ENCODE measurements at regions of chr11 and their contacts with region 1.

Region 1: DNA sequence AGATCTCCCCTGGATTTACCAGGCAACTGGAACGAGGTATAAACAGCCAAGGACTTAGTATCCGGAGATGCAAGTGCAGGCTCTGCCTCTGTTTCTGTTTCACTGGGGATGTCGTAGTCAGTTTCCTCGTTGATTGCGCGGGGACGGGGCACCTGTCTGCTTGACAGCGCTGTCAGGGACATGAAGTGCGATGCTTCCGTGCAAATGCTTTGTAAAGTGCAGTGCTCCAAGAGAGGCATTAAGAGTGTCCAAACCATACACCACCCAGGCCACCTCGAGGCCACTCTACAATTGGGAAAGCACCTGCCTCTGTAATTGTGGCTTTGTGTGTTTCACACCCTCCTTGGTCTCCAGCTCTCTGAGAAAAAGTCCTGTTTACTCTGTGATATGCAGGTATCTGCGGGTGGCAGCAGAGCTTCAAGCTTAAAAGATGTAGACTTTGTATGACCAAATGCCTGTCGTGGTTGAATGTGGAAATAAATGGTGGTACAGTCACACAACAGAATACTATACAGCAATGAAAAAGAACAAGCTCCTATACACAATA is 18.6 kb upstream of the CD5 start:
- DNase-seq: peak; percentile 84
- H3K4me3 Mint-ChIP-seq: peak overlapping the region; percentile 85
- H3K27ac Mint-ChIP-seq: peak overlapping the region; percentile 92
- H3K4me1 Mint-ChIP-seq: peaks cover 58% of the 10 kb centered on the region
- H3K27me3 Mint-ChIP-seq: no peaks in the 10 kb centered on the region

Region 2: DNA sequence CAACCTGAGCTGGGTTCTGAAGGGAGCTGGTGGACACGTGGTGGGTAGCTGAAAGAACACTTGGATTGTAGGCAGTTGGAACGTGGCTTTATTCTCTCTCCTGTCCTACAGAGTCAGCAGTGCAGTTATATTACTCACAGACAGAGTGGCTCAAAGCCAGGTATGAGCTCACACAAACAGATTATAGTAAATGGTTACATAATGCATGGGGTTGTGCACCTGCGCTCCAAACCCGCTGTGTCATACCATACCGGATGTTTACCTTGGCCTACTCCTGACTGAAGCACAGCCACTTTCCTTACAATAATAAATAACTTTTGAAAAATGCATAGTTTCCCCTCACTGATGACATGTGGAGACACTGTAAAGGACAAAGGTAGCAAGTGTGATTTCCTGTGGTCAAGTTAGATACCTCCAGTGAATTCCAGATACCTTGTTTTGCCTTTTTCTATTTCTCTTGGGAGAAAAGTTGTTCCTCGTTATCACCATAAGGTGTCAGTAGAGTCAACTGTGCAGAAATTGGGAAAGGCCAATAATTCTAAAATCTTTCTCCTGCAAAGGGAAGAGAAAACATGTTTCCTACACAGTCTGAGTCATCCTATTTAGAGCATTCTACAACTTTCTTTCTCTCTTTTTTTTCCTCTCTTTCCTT is 914.3 kb before region 1 on chr11:
- CTCF ChIA-PET with region 1: no interaction called
- POLR2A ChIA-PET with region 1: no interaction called
- intact Hi-C with region 1: no loop called
- DNase-seq: peak; percentile 24
- H3K4me3 Mint-ChIP-seq: no peak overlapping the region
- H3K27ac Mint-ChIP-seq: no peak overlapping the region
- H3K4me1 Mint-ChIP-seq: peaks cover 7% of the 10 kb centered on the region
- H3K27me3 Mint-ChIP-seq: peaks cover 30% of the 10 kb centered on the region

Region 3: GRCh38 chr11:60739114-60739513 is 344.6 kb before region 1 on chr11:
- CTCF ChIA-PET with region 1: no interaction called
- POLR2A ChIA-PET with region 1: no interaction called
- intact Hi-C with region 1: no loop called
- DNase-seq: no peak
- H3K4me3 Mint-ChIP-seq: no peak overlapping the region
- H3K27ac Mint-ChIP-seq: no peak overlapping the region
- H3K4me1 Mint-ChIP-seq: no peaks in the 10 kb centered on the region
- H3K27me3 Mint-ChIP-seq: peaks cover 4% of the 10 kb centered on the region

Region 4: DNA sequence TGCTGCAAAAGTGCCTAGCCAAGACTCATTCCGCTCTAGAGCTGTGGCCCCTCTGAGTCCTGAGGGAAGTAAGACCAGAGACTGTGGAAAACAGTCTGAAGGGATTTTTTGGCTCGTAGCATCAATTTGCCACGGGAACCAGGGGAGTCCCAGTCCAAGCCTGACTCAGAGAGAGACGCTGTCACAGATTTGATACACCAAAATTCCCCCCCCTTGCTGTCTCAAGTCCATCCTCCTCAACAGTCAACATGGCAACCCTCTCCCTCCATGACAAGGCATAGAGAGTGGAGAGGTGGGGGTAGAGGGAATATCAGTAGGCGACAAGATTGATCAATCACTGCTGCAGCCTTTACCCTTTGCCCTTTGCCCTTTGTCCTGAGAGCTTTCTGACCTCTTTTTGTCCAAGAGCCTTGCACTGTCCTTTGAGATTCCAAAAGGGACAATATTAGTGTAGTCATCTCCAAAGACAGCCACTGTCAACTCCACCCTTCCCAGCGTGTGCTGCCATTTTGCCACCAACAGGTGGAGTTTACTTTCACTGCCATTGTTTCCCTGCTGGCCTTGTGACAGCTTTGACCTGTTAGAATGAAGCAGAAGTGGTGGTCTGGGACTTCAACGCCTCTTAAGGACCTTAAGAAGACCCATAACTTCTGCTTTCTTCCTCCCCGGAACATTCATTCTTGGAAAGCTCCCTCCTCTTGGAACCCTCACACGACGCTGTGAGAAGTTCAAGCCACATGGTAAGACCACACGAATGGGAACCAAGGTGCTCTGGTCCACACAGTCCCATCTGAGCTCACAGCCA is 139.0 kb before region 1 on chr11:
- CTCF ChIA-PET with region 1: no interaction called
- POLR2A ChIA-PET with region 1: no interaction called
- intact Hi-C with region 1: no loop called
- DNase-seq: no peak
- H3K4me3 Mint-ChIP-seq: no peak overlapping the region
- H3K27ac Mint-ChIP-seq: no peak overlapping the region
- H3K4me1 Mint-ChIP-seq: peaks cover 4% of the 10 kb centered on the region
- H3K27me3 Mint-ChIP-seq: peaks cover 7% of the 10 kb centered on the region

Region 5: GRCh38 chr11:60970369-60970774 is 113.3 kb before region 1 on chr11:
- CTCF ChIA-PET with region 1: interaction called, 12 read pairs
- POLR2A ChIA-PET with region 1: no interaction called
- intact Hi-C with region 1: loop called (anchors 2 kb)
- DNase-seq: peak; percentile 89
- H3K4me3 Mint-ChIP-seq: peak overlapping the region; percentile 95
- H3K27ac Mint-ChIP-seq: peak overlapping the region; percentile 99
- H3K4me1 Mint-ChIP-seq: peaks cover 15% of the 10 kb centered on the region
- H3K27me3 Mint-ChIP-seq: no peaks in the 10 kb centered on the region

Region 6: GRCh38 chr11:61021661-61022212 is 61.9 kb before region 1 on chr11:
- CTCF ChIA-PET with region 1: no interaction called
- POLR2A ChIA-PET with region 1: interaction called, 21 read pairs
- intact Hi-C with region 1: loop called (anchors 2 kb)
- DNase-seq: peak; percentile 94
- H3K4me3 Mint-ChIP-seq: peak overlapping the region; percentile 75
- H3K27ac Mint-ChIP-seq: peak overlapping the region; percentile 99
- H3K4me1 Mint-ChIP-seq: peaks cover 89% of the 10 kb centered on the region
- H3K27me3 Mint-ChIP-seq: no peaks in the 10 kb centered on the region

Region 7: GRCh38 chr11:61054927-61055562 is 28.6 kb before region 1 on chr11:
- CTCF ChIA-PET with region 1: interaction called, 3 read pairs
- POLR2A ChIA-PET with region 1: interaction called, 55 read pairs
- intact Hi-C with region 1: loop called (anchors 2 kb)
- DNase-seq: peak; percentile 88
- H3K4me3 Mint-ChIP-seq: peak overlapping the region; percentile 46
- H3K27ac Mint-ChIP-seq: peak overlapping the region; percentile 95
- H3K4me1 Mint-ChIP-seq: peaks cover 89% of the 10 kb centered on the region
- H3K27me3 Mint-ChIP-seq: no peaks in the 10 kb centered on the region

Region 8: GRCh38 chr11:61102667-61103571 is 19.2 kb after region 1 on chr11:
- CTCF ChIA-PET with region 1: interaction called, 10 read pairs
- POLR2A ChIA-PET with region 1: interaction called, 38 read pairs
- intact Hi-C with region 1: no loop called
- DNase-seq: peak; percentile 51
- H3K4me3 Mint-ChIP-seq: no peak overlapping the region
- H3K27ac Mint-ChIP-seq: no peak overlapping the region
- H3K4me1 Mint-ChIP-seq: peaks cover 28% of the 10 kb centered on the region
- H3K27me3 Mint-ChIP-seq: no peaks in the 10 kb centered on the region

Region 9: GRCh38 chr11:61161190-61162091 is 77.8 kb after region 1 on chr11 and contains the start of gene VPS37C:
- CTCF ChIA-PET with region 1: no interaction called
- POLR2A ChIA-PET with region 1: no interaction called
- intact Hi-C with region 1: loop called (anchors 2 kb)
- DNase-seq: peak; percentile 94
- H3K4me3 Mint-ChIP-seq: peak within 1 kb of the TSS; percentile 85
- H3K27ac Mint-ChIP-seq: peak within 1 kb of the TSS; percentile 94
- H3K4me1 Mint-ChIP-seq: peaks cover 53% of the 10 kb centered on the region
- H3K27me3 Mint-ChIP-seq: peaks cover 2% of the 10 kb centered on the region
- total RNA-seq, gene VPS37C: 9.0 TPM

Region 10: DNA sequence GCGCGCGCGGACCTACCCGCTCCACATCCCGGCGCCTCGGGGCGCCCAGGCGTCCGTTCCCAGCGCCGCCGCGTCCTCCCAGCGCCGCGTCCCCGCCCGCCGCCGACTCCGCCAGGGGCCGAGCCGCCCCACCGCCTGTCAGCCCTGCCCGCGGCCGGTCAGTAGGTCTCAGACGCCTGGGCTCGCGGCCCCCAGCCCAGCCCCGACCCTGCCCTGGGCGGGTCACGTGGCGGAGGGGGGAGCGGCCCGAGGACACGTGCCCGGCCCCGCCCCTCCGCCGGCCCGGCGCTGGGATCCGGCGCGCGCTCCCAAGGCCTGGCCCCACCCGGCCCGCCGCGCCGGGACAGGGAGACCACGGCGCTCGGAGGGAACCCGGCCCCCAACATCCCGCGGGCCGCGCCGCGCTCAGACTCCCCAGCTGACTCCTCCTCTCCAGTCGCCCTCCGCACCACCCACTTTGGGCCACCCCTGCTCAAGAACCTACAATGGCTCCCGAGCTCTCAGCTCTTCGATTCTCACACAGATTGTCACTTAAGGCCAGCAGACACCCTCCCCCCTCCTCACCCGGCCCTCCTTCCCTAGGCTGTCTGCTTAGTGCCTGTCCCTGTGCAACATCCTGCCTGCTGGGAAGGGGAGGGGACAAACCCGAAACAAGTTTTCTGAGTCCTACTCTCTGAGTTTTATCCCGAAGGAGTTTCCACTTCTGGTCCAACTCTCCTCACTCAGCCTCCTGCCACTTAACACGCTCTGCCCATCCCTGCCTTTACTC is 833.9 kb after region 1 on chr11 and contains the start of gene RAB3IL1:
- CTCF ChIA-PET with region 1: no interaction called
- POLR2A ChIA-PET with region 1: no interaction called
- intact Hi-C with region 1: no loop called
- DNase-seq: no peak
- H3K4me3 Mint-ChIP-seq: peak within 1 kb of the TSS; percentile 67
- H3K27ac Mint-ChIP-seq: no peak within 1 kb of the TSS
- H3K4me1 Mint-ChIP-seq: peaks cover 9% of the 10 kb centered on the region
- H3K27me3 Mint-ChIP-seq: peaks cover 48% of the 10 kb centered on the region
- total RNA-seq, gene RAB3IL1: 0.10 to 0.21 TPM